GM12878 (cell line): ENCODE measurements at regions of chr9 and their contacts with region 1.

Region 1: DNA sequence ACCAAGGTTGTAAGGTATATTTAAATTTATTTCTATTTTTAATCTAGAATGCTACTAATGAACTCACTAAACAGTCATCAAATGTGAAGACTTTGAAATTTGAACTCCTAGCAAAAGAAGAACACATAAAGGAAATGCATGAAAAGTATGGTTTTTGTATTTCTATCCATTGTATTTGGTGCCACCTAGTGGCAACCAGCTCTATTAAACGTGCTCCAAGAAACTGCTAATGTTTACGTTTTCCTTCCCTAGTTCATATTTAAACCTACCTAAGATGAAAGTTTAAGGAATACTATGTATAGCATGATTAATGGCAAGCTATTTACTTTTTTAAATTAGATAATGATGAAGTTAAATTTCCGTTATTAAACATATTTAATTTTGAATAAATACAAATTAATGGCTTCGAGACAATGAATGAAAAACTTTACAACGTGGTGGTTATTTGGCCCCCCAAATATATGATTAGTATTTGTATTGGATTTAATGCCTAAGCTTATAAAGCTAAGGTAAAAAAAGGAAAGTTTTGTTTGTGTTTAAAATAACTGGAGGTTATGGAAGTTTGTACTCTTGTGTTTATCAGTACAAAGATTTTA is 115.9 kb upstream of the SH3GL2 start:
- DNase-seq: no peak
- ATAC-seq: peak; percentile 66
- H3K4me3 ChIP-seq: no peak overlapping the region
- H3K27ac ChIP-seq: no peak overlapping the region
- H3K4me1 ChIP-seq: no peaks in the 10 kb centered on the region
- H3K27me3 ChIP-seq: no peaks in the 10 kb centered on the region
- CTCF ChIP-seq: peak; percentile 55 to 73 (median 58); a peak in 5 of 6 replicates
- EP300 ChIP-seq: no peak
- POLR2A ChIP-seq: no peak
- RAD21 ChIP-seq: peak; percentile 81

Region 2: GRCh38 chr9:15873569-15874177 is 1589.3 kb before region 1 on chr9:
- CTCF ChIA-PET with region 1: interaction called, 3 read pairs
- POLR2A ChIA-PET with region 1: no interaction called
- RAD21 ChIA-PET with region 1: no interaction called
- SMC1A ChIA-PET with region 1: no interaction called
- in situ Hi-C with region 1: loop called (anchors 10 kb)
- intact Hi-C with region 1: loop called (anchors 2 kb)
- DNase-seq: no peak
- ATAC-seq: peak; percentile 79
- H3K4me3 ChIP-seq: no peak overlapping the region
- H3K27ac ChIP-seq: no peak overlapping the region
- H3K4me1 ChIP-seq: no peaks in the 10 kb centered on the region
- H3K27me3 ChIP-seq: no peaks in the 10 kb centered on the region
- CTCF ChIP-seq: peak; percentile 44 to 59 (median 55); a peak in 5 of 6 replicates
- EP300 ChIP-seq: no peak
- POLR2A ChIP-seq: no peak
- RAD21 ChIP-seq: peak; percentile 76

Region 3: DNA sequence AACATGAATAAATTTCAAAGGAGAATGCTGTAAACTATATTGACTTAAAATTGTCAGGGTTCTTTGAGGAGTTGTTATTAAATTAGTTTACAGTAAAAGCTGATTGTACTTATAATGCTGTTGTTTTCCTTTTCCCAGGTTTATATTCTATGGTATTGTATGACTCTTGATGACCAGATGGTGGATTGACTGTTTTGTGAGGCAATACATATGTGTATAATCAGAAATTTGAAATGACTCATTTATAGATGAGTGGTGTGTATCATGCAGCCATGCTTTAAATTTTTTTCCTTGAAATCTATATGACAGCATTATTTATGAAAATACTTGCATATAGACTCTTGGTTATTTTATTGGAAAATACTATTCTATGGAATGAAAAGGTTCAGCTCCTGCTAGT is 132.9 kb before region 1 on chr9:
- CTCF ChIA-PET with region 1: no interaction called
- POLR2A ChIA-PET with region 1: no interaction called
- RAD21 ChIA-PET with region 1: no interaction called
- SMC1A ChIA-PET with region 1: no interaction called
- in situ Hi-C with region 1: no loop called
- intact Hi-C with region 1: no loop called
- DNase-seq: no peak
- ATAC-seq: no peak
- H3K4me3 ChIP-seq: no peak overlapping the region
- H3K27ac ChIP-seq: no peak overlapping the region
- H3K4me1 ChIP-seq: no peaks in the 10 kb centered on the region
- H3K27me3 ChIP-seq: no peaks in the 10 kb centered on the region
- CTCF ChIP-seq: no peak
- EP300 ChIP-seq: no peak
- POLR2A ChIP-seq: no peak
- RAD21 ChIP-seq: no peak

Region 4: GRCh38 chr9:17422994-17423680 is 39.8 kb before region 1 on chr9:
- CTCF ChIA-PET with region 1: no interaction called
- POLR2A ChIA-PET with region 1: no interaction called
- RAD21 ChIA-PET with region 1: no interaction called
- SMC1A ChIA-PET with region 1: no interaction called
- in situ Hi-C with region 1: no loop called
- intact Hi-C with region 1: no loop called
- DNase-seq: no peak
- ATAC-seq: no peak
- H3K4me3 ChIP-seq: no peak overlapping the region
- H3K27ac ChIP-seq: no peak overlapping the region
- H3K4me1 ChIP-seq: no peaks in the 10 kb centered on the region
- H3K27me3 ChIP-seq: no peaks in the 10 kb centered on the region
- CTCF ChIP-seq: no peak
- EP300 ChIP-seq: no peak
- POLR2A ChIP-seq: no peak
- RAD21 ChIP-seq: no peak